ENCODE measurements at regions of chr21 and their contacts with region 1.

Region 1: DNA sequence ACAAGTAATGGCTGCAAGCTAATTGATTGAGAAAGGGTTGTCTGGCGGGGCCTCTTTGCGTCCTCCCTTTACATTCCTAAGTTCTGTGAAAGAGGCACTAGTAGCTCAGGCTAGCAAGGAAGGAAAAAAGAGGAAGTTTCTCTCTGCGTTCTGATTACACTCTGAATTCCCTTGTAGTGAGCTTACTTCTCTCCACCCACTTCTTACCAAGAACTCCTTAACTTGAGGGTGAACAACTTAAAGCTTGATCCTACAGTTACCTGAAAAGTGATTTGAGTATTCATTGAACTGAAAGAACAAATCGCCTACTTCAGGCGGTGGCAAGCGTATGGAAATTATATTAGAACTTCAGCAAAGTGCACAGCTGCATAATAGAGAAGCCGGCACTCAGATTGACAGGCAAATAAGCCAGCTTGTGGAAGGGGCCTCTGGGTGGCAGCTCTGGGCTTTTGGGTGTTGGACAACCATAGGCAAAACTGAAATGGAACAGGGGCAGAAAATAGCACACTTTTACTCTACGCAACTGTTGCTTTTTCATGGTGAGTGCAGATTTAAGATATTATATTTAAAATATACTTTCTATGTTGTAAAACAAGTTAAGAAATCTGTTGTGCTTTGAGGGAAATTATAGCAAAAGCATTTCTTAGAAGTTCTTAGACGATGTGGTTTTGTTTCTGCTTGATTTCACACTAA is 464.5 kb downstream of the USP25 start:
- H3K4me3 Mint-ChIP-seq: peak overlapping the region; percentile 71
- H3K27ac Mint-ChIP-seq: peak overlapping the region; percentile 88
- H3K4me1 Mint-ChIP-seq: peaks cover 28% of the 10 kb centered on the region
- H3K27me3 Mint-ChIP-seq: peaks cover 2% of the 10 kb centered on the region

Region 2: DNA sequence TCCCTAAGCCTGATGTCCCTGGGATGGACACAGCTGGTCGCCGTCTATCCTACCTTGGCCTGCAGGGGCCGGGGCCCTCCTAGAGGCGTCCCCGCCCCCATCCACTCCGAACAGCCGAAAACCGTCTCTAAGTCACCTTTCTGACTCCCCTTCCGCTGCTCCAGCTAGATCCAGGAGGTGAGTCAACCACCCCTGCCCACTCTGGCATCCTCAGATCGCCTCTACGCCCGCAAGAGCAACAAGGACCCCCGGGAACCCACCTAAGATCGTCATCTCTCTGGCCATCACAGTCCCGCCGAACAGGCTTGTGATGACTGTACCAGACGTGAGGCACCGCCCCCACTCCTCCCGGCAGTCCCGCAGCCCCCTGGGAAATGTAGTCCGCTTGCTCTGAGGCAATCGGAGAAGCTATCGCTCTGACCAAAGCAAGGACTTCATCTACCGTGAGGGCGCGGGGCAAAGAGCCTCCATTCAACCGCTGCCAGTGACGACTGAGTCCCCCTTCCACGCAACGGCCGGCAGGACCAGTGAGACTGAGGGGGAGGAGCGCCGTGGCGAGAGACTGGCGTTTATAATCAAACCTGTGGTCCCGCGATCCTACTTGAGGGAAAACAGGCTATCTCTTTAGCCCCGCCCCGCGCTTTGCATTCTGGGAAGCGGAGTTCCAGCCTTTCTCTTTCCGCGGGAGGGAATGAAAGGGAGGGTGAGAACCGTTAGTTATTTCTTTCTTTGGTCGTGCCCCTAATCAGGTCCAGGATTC is 1811.2 kb before region 1 on chr21 and contains the start of gene HSPA13:
- intact Hi-C with region 1: loop called (anchors 10 kb)
- H3K4me3 Mint-ChIP-seq: peak within 1 kb of the TSS; percentile 100
- H3K27ac Mint-ChIP-seq: peak within 1 kb of the TSS; percentile 97
- H3K4me1 Mint-ChIP-seq: peaks cover 21% of the 10 kb centered on the region
- H3K27me3 Mint-ChIP-seq: no peaks in the 10 kb centered on the region

Region 3: DNA sequence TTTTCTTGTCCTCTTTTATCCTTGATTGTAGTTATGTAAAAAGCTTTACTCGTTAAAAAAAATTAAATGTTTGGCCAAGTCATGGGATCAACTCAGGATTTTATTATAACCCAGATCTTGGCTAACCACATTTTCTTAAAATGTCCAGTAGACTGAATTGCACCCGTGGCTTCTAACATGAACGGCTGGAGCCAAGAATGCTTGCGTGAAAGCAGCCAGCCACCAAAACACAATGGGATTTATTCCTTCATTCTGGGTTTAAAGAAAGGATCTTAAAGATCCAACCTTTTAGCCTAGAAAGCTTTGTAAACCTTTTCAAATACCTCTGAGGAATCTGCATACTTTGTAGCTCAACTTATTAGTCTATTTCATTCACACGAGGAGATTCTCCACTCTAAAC is 60.1 kb before region 1 on chr21:
- intact Hi-C with region 1: no loop called
- H3K4me3 Mint-ChIP-seq: no peak overlapping the region
- H3K27ac Mint-ChIP-seq: no peak overlapping the region
- H3K4me1 Mint-ChIP-seq: no peaks in the 10 kb centered on the region
- H3K27me3 Mint-ChIP-seq: no peaks in the 10 kb centered on the region

Region 4: GRCh38 chr21:16264319-16264718 is 70.1 kb after region 1 on chr21:
- intact Hi-C with region 1: loop called (anchors 2 kb)
- H3K4me3 Mint-ChIP-seq: no peak overlapping the region
- H3K27ac Mint-ChIP-seq: no peak overlapping the region
- H3K4me1 Mint-ChIP-seq: no peaks in the 10 kb centered on the region
- H3K27me3 Mint-ChIP-seq: no peaks in the 10 kb centered on the region